ENCODE measurements at regions of chr2 and their contacts with region 1.

Region 1: DNA sequence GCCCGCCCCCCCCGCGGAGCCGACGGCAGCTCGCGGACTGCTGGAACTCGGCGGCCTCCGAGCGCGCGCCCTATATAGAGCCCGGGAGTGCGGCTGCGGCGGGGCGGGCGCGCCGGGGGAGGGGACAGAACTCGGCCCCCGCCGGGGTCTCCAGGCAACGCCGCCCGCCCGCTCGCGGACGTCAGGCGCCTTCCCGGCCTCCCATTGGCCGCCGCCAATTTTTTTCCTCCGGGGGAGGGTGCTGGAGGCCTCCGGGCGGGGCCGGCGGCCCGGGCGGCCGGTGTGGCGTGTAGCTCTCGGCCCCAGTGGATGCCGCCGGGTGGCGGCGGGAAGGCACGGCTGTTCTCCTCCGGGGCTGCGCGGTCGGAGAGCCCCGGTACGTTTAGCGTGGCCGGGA is at the start of gene ZFP36L2:
- DNase-seq: peak; percentile 96 to 97
- ATAC-seq: peak; percentile 58 to 78
- H3K4me3 ChIP-seq: peak within 1 kb of the TSS; percentile 86
- H3K27ac ChIP-seq: peak within 1 kb of the TSS; percentile 89 to 98
- H3K4me1 ChIP-seq: peaks cover 40% of the 10 kb centered on the region
- CTCF ChIP-seq: no peak
- EP300 ChIP-seq: no peak
- POLR2A ChIP-seq: peak; percentile 84
- RAD21 ChIP-seq: no peak; a peak in 1 of 5 replicates
- polyA plus RNA-seq, gene ZFP36L2: 10.5 and 14.9 TPM in 2 replicates

Region 2: DNA sequence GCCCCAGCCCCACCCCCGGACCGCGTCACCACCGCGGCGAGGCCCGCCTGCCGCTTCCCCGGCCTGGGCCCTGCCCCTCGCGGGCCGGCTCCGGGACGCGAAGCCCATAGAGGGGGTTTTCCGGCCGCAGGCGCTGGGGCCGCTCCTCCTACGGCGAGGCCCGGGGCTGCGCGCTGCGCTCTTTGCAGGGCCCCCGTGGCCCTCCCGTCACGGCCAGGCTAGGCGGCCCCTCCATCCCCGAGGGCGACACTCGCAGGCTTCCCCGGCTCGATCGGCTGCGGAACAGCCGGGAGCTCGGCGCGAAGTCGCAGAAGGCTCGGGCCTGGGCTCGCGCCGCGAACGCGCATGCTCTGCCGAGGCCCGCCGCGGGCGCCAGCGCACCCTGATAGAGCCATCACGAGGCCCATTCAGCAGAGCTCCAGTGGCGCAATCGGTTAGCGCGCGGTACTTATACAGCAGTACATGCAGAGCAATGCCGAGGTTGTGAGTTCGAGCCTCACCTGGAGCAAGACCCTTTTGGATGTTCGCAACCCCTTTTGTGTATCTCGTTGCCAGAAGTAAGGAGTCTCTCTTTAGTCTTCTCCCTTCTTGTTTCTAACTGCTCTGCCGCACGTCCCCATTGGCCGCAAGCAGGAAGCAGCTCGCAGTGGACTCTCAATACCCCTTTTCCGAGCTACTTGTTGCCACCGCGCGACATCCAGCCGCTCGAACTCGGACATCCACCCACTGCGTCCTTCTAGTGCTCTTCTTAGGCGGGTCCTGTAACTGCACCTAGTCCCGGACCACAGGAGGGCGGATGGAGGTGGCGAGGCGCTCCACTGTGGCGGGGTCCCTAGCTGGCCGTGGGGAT is 416.2 kb before region 1 on chr2:
- CTCF ChIA-PET with region 1: interaction called, 5 read pairs
- POLR2A ChIA-PET with region 1: interaction called, 24 read pairs
- DNase-seq: peak; percentile 92 to 98
- ATAC-seq: peak; percentile 84 to 88
- H3K4me3 ChIP-seq: peak overlapping the region; percentile 45
- H3K27ac ChIP-seq: peak overlapping the region; percentile 88 to 92
- H3K4me1 ChIP-seq: peaks cover 10% of the 10 kb centered on the region
- CTCF ChIP-seq: peak; percentile 3; the same call in 1 of the 3 replicates
- EP300 ChIP-seq: no peak
- POLR2A ChIP-seq: peak; percentile 87
- RAD21 ChIP-seq: 0 out of 5 replicates have a peak, but pooled peaks of 1 of the 2 experiments have one; percentile 8

Region 3: GRCh38 chr2:42944779-42945415 is 281.7 kb before region 1 on chr2:
- CTCF ChIA-PET with region 1: interaction called, 166 read pairs
- POLR2A ChIA-PET with region 1: interaction called, 7 read pairs
- DNase-seq: peak; percentile 44 to 60
- ATAC-seq: peak; percentile 48 to 79; a peak in 4 of 6 replicates
- H3K4me3 ChIP-seq: no peak overlapping the region
- H3K27ac ChIP-seq: no peak overlapping the region
- H3K4me1 ChIP-seq: no peaks in the 10 kb centered on the region
- CTCF ChIP-seq: no peak
- EP300 ChIP-seq: no peak
- POLR2A ChIP-seq: no peak
- RAD21 ChIP-seq: no peak

Region 4: GRCh38 chr2:42979870-42980763 is 246.4 kb before region 1 on chr2:
- CTCF ChIA-PET with region 1: interaction called, 253 read pairs
- POLR2A ChIA-PET with region 1: interaction called, 15 read pairs
- DNase-seq: no peak
- ATAC-seq: peak; percentile 10 to 22; a peak in 3 of 6 replicates
- H3K4me3 ChIP-seq: no peak overlapping the region
- H3K27ac ChIP-seq: peak overlapping the region; percentile 58 to 73; a peak in 5 of 6 replicates
- H3K4me1 ChIP-seq: peaks cover 29% of the 10 kb centered on the region
- CTCF ChIP-seq: no peak
- EP300 ChIP-seq: no peak
- POLR2A ChIP-seq: no peak
- RAD21 ChIP-seq: no peak

Region 5: DNA sequence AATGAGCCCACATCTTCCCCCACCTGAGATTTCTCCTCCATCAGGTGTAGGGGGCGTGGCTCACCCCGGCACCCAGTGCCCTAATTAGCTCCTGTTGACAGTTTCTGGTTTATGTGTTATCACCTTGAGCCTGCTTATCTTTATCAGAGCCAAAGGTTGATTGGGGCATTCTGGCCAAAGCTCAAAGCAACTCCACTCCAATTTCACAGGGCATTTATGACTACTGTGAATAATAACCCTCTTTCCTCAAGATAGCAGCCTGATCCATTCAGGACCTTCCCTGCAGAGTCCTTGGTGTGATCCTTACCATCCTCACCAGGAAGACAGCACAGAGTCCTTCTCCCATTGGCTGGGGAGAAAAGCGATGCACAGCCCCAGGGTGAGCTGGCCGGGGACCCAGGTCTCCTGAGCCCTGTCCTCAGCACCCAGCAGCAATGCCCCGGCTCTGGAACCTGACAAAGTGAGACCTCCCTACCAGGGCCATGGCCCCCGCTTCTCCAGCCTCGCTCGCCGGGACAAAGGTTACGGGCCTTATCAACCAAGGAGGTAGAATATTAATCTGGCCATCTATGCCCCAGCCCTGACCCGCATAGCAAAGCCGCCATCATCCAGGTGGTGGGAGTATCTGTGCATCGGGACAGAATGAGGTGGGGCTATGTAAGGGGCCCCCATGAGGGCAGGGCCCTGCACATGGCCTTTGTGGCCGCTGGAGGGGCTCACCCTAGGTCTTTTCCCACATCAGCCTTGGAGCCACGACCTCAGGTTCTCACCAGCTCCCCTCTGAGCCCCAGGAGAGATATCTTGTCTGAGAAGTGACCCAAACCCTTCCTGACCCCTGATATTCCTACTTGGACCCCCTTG is 64.7 kb before region 1 on chr2:
- CTCF ChIA-PET with region 1: interaction called, 20 read pairs
- POLR2A ChIA-PET with region 1: interaction called, 10 read pairs
- DNase-seq: no peak
- ATAC-seq: no peak
- H3K4me3 ChIP-seq: no peak overlapping the region
- H3K27ac ChIP-seq: peak overlapping the region; percentile 67 to 95
- H3K4me1 ChIP-seq: peaks cover 72% of the 10 kb centered on the region
- CTCF ChIP-seq: no peak
- EP300 ChIP-seq: no peak
- POLR2A ChIP-seq: no peak
- RAD21 ChIP-seq: no peak

Region 6: GRCh38 chr2:43239981-43240761 is 13.6 kb after region 1 on chr2:
- CTCF ChIA-PET with region 1: interaction called, 50 read pairs
- POLR2A ChIA-PET with region 1: no interaction called
- DNase-seq: peak in 1 of 2 experiments; percentile 28
- ATAC-seq: peak; percentile 38 to 65; a peak in 4 of 6 replicates
- H3K4me3 ChIP-seq: no peak overlapping the region
- H3K27ac ChIP-seq: no peak overlapping the region
- H3K4me1 ChIP-seq: no peaks in the 10 kb centered on the region
- CTCF ChIP-seq: no peak; the same call in 2 of the 3 replicates
- EP300 ChIP-seq: no peak
- POLR2A ChIP-seq: no peak
- RAD21 ChIP-seq: peak in 1 of 2 experiments; percentile 41; a peak in 2 of 5 replicates

Region 7: DNA sequence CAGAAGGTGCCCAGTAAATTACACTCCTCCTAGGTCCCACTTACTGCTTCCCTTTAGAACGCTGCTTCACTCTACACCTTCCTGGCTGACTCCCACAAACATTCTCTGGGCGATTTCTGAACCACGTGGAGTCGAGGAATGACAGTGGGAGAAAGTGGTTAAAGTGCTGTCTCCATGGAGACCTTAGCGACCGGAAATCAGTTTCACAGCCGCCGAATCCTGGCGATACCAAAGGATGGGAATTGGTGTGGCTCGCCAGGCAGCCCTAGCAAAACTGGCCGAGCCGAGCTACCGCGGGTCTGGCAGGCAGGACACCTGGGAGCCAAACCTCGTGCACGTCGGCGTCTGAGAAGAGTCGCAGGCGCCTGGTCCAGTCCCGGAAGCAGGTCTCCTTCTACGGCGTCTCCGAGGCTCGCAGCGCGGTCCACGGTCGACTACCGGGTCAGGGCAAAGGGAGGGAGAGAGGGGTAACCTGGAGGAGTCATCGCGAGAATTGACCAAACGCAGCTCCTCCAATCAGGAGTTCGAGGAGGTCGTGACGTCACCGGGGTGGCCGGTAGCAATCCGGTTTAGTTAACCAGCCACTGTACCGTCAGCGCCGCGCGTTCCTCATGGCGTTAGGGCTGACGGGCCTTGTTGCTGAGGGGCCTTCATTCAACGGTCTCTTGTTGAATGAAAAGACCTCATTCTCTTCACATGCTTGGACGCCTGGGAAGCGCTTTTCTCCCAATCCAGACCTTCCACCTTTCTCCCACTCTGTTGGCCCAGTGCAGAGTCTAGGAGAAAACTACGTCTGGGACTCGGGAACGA is 369.3 kb after region 1 on chr2 and contains the start of gene THADA:
- CTCF ChIA-PET with region 1: no interaction called
- POLR2A ChIA-PET with region 1: interaction called, 10 read pairs
- DNase-seq: peak; percentile 96 to 100
- ATAC-seq: peak; percentile 97 to 99
- H3K4me3 ChIP-seq: peak within 1 kb of the TSS; percentile 65
- H3K27ac ChIP-seq: peak within 1 kb of the TSS; percentile 90 to 93
- H3K4me1 ChIP-seq: peaks cover 19% of the 10 kb centered on the region
- CTCF ChIP-seq: no peak
- EP300 ChIP-seq: no peak
- POLR2A ChIP-seq: peak; percentile 97
- RAD21 ChIP-seq: no peak
- polyA plus RNA-seq, gene THADA: 37.9 and 51.8 TPM in 2 replicates

Region 8: DNA sequence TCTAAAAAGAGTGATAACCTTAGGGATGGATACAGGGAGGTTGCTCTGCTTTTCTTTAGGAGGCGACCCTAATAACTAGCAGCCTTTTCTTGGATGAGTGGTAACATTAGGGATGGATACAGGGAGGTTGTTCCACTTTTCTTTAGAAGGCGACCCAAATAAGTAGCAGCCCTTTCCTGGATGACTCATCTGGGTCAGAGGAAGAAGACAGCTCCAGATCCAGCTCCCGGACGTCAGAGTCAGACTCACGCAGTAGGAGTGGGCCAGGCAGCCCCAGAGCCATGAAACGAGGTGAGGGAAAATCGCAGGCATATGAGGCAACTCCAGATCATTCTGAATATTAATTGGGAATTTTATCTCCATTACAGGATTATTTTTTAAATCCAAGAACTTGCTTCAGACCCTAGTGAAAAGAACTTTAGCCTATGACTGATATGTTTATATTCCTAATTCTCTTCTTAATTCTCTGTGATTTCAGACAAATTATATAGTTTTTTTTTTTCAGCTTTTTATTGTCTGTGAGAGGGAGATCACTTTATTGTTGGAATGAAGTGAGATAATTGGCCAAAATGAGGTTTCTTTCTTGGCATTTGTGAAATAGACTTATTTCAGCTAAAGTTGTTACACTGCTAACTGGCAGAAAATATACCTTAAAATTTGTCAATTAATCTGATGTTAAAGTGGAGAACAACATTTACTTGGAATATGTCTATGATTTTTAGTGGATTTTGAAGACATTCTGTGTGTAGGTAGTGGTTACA is 480.9 kb after region 1 on chr2:
- CTCF ChIA-PET with region 1: no interaction called
- POLR2A ChIA-PET with region 1: no interaction called
- DNase-seq: peak; percentile 27 to 37
- ATAC-seq: peak; percentile 76 to 82; a peak in 5 of 6 replicates
- H3K4me3 ChIP-seq: no peak overlapping the region
- H3K27ac ChIP-seq: no peak overlapping the region
- H3K4me1 ChIP-seq: peaks cover 6% of the 10 kb centered on the region; the same call in 2 of the 3 replicates
- CTCF ChIP-seq: no peak
- EP300 ChIP-seq: no peak
- POLR2A ChIP-seq: no peak
- RAD21 ChIP-seq: no peak

Measured in A549 (cell line).